Right ventricle myocardium inferior (tissue), 1 donor: ENCODE measurements at regions of chr12 and their contacts with region 1.

Region 1: GRCh38 chr12:48165094-48165981 is 8.0 kb upstream of the ASB8 start:
- DNase-seq: no peak
- ATAC-seq: peak; percentile 57

Region 2: DNA sequence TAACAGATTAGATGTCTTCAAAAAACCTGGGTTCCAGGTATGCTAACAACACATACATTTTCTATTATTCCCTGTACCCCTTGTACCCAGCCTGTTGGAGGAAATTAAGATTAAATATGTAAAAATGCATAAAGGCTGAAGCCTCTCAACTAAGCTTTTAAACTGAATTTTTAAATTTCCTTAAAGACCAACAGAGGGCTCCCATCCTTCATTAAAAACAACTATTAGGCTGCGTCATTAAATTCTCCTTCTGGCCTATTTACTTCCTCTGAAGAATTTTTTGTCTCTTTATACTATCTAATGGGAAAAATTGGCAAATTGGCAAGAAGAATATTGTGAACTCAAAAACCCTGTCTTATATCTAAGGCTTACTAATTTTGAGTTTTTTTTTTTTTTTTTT is 81.3 kb before region 1 on chr12:
- intact Hi-C with region 1: loop called (anchors 1 kb)
- DNase-seq: no peak
- ATAC-seq: no peak

Region 3: GRCh38 chr12:48216785-48217184 is 51.4 kb after region 1 on chr12:
- intact Hi-C with region 1: no loop called
- DNase-seq: no peak
- ATAC-seq: no peak

Region 4: DNA sequence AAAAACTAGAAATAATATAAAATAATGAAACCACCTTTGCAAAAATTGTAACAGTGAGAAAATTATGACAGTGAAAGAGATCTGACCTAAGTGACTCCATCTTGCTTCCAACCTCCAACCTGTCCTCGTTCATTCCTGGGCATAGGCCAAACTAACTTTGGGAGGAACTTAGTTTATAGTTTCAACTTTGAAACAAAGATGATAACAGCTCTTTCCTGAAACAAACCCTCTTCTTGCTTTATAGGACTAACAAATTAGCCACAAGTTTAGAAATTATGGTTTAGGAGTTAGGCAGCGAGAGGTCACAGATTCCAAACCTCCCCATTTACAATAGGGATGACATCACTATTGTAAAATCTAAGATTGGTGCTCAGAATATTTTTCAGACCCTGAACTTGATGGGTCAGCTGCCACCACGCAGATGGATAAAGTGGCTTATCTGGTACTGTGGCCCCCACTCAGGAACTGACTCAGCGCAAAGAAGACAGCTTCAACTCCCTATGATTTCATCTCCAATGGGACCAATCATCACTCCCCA is 70.5 kb after region 1 on chr12:
- intact Hi-C with region 1: no loop called
- DNase-seq: no peak
- ATAC-seq: no peak